Pancreas (tissue), 10 donors: ENCODE measurements at regions of chr7 and their contacts with region 1.

Region 1: GRCh38 chr7:99040104-99040958 is 103.6 kb downstream of the SMURF1 start:
- DNase-seq: peak; percentile 71 to 85 (median 76)
- ATAC-seq: peak; percentile 76 to 92 (median 89)
- H3K4me3 ChIP-seq: no peak overlapping the region
- H3K27ac ChIP-seq: no peak overlapping the region
- H3K4me1 ChIP-seq: peaks cover 0 to 4% (median 0%) of the 10 kb centered on the region in 3 donors
- H3K27me3 ChIP-seq: no peaks in the 10 kb centered on the region
- CTCF ChIP-seq: peak; percentile 42 to 76 (median 64)

Region 2: DNA sequence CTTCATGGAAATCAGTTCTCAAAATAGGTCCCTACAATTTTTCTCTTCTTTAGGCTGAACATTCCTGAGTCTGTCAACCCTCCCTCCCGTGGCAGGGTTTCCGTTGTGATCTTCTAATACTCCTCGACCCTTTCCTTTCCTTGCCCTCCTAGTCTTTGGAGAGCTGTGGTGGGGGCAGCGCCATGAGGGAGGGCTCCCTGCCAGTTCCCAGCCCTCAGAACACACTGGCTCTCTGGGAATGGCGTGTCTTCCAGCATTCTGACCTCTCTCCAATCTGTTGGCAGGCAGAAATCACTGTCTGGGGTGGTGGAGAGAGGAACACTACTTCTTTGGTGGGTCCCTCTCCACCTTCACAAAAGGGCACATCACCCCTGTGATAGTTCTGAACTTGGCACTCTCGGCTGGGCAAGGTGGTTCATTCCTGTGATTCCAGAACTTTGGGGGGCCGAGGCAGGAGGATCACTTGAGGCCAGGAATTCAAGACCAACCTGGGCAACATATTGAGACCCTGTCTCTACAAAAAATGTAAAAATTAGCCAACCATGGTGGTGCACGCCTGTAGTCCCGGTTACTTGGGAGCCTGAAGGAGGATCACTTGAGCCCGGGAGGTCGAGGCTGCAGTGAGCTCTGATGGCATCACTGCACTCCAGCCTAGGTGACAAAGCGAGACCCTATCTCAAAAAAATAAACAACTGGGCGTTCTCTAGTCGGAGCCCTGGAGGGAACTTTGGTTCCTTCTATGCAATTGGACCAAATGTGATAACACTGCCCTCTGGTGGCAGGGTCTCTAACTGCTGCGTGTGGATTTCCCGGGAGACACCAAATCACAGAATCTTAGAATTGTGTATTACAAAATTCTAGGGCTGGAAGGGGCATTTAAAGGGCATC is 272.2 kb after region 1 on chr7:
- intact Hi-C with region 1: loop called (anchors 2 to 10 kb)
- DNase-seq: peak in 5 of 6 donors; percentile 43 to 87 (median 68)
- ATAC-seq: peak; percentile 84 to 98 (median 90)
- H3K4me3 ChIP-seq: no peak overlapping the region
- H3K27ac ChIP-seq: no peak overlapping the region
- H3K4me1 ChIP-seq: peaks cover 0 to 4% (median 0%) of the 10 kb centered on the region in 3 donors
- H3K27me3 ChIP-seq: no peaks in the 10 kb centered on the region
- CTCF ChIP-seq: peak; percentile 89 to 92 (median 90)